ENCODE measurements at regions of chr9 and their contacts with region 1.

Region 1: DNA sequence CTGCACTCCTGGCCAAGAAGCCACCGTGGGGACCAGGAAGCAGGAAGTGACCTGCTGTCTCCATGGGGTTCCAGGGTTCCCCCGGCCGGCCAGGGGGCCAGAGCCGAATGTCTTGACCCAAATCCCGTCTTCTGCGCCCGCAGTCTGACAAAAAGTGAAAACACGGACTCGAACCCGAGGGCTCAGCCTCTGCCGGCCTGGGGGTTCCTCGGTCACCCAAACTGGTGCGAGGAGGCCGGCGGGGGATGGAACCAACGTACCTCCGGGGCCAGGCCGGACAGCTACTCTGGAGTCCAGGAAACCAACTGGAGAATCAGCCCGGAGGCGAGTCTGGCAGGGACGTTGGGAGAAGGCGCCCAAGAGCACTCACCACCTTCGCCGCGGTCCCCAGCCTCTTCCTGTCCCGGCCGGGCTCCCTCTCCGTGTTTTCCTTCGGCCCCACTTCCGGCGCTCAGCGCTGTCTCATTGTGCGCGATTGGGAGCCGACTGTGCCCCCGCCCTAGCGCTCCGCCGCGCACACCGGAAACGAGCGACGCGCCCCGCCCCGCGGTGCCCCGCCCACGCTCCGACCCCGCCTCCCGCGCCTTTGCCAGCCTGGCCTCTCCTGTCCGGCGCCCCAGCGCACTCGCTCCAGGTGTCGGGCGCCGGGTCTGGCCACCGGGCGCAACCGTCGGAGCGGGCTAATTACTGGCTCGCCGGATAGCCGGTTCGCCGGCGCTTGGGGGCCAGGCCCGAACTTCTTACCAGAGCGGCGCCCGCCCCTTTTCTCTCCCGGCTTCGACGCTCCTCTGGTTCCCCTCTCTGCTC is at the start of gene TUT7:
- DNase-seq: peak; percentile 90 to 99 (median 94)
- ATAC-seq: peak; percentile 98
- H3K4me3 ChIP-seq: peak within 1 kb of the TSS; percentile 95
- H3K4me3 Mint-ChIP-seq: peak within 1 kb of the TSS; percentile 80 to 97 (median 95)
- H3K27ac ChIP-seq: peak within 1 kb of the TSS; percentile 84
- H3K27ac Mint-ChIP-seq: peak within 1 kb of the TSS; percentile 85 to 97 (median 94)
- H3K4me1 ChIP-seq: peaks cover 7 to 14% of the 10 kb centered on the region in 2 donors
- H3K4me1 Mint-ChIP-seq: peaks cover 28 to 57% (median 50%) of the 10 kb centered on the region in 7 donors
- H3K27me3 ChIP-seq: no peaks in the 10 kb centered on the region
- H3K27me3 Mint-ChIP-seq: peaks cover 0 to 10% (median 0%) of the 10 kb centered on the region in 5 donors
- total RNA-seq, gene TUT7: 38.5 to 57.4 (median 49.0) TPM

Region 2: GRCh38 chr9:85741875-85742629 is 612.2 kb before region 1 on chr9 and contains the start of gene AGTPBP1:
- CTCF ChIA-PET with region 1: no interaction called
- POLR2A ChIA-PET with region 1: no interaction called
- intact Hi-C with region 1: loop called in 1 of 2 experiments (anchors 1 kb)
- DNase-seq: peak; percentile 95 to 99 (median 97)
- ATAC-seq: peak; percentile 93
- H3K4me3 ChIP-seq: peak within 1 kb of the TSS; percentile 88
- H3K4me3 Mint-ChIP-seq: peak within 1 kb of the TSS; percentile 90 to 99 (median 95)
- H3K27ac ChIP-seq: peak within 1 kb of the TSS; percentile 93
- H3K27ac Mint-ChIP-seq: peak within 1 kb of the TSS; percentile 91 to 99 (median 95)
- H3K4me1 ChIP-seq: peaks cover 0 to 14% of the 10 kb centered on the region in 2 donors
- H3K4me1 Mint-ChIP-seq: peaks cover 14 to 48% (median 33%) of the 10 kb centered on the region in 7 donors
- H3K27me3 ChIP-seq: no peaks in the 10 kb centered on the region
- H3K27me3 Mint-ChIP-seq: peaks cover 0 to 18% (median 0%) of the 10 kb centered on the region in 5 donors
- total RNA-seq, gene AGTPBP1: 31.9 to 85.7 (median 59.6) TPM

Region 3: GRCh38 chr9:86282077-86282978 is 71.9 kb before region 1 on chr9 and contains the start of gene ISCA1:
- CTCF ChIA-PET with region 1: no interaction called
- POLR2A ChIA-PET with region 1: interaction called, 6 read pairs
- intact Hi-C with region 1: loop called (anchors 1 kb)
- DNase-seq: peak; percentile 97 to 99 (median 97)
- ATAC-seq: peak; percentile 92
- H3K4me3 ChIP-seq: peak within 1 kb of the TSS; percentile 89
- H3K4me3 Mint-ChIP-seq: peak within 1 kb of the TSS; percentile 85 to 98 (median 94)
- H3K27ac ChIP-seq: peak within 1 kb of the TSS; percentile 99
- H3K27ac Mint-ChIP-seq: peak within 1 kb of the TSS; percentile 90 to 98 (median 96)
- H3K4me1 ChIP-seq: peaks cover 14 to 17% of the 10 kb centered on the region in 2 donors
- H3K4me1 Mint-ChIP-seq: peaks cover 30 to 53% (median 48%) of the 10 kb centered on the region in 7 donors
- H3K27me3 ChIP-seq: no peaks in the 10 kb centered on the region
- H3K27me3 Mint-ChIP-seq: no peaks in the 10 kb centered on the region
- total RNA-seq, gene ISCA1: 26.3 to 62.3 (median 38.4) TPM

Region 4: GRCh38 chr9:86337469-86338108 is 16.6 kb before region 1 on chr9:
- CTCF ChIA-PET with region 1: no interaction called
- POLR2A ChIA-PET with region 1: interaction called, 6 read pairs
- intact Hi-C with region 1: loop called (anchors 1 kb)
- DNase-seq: no peak
- ATAC-seq: peak; percentile 70
- H3K4me3 ChIP-seq: peak overlapping the region; percentile 46
- H3K4me3 Mint-ChIP-seq: peak overlapping the region in 9 of 10 donors; percentile 37 to 88 (median 85)
- H3K27ac ChIP-seq: no peak overlapping the region
- H3K27ac Mint-ChIP-seq: peak overlapping the region in 7 of 9 donors; percentile 31 to 81 (median 68)
- H3K4me1 ChIP-seq: peaks cover 0 to 16% of the 10 kb centered on the region in 2 donors
- H3K4me1 Mint-ChIP-seq: peaks cover 12 to 52% (median 25%) of the 10 kb centered on the region in 7 donors
- H3K27me3 ChIP-seq: no peaks in the 10 kb centered on the region
- H3K27me3 Mint-ChIP-seq: no peaks in the 10 kb centered on the region

Region 5: GRCh38 chr9:86948074-86948929 is 594.1 kb after region 1 on chr9:
- CTCF ChIA-PET with region 1: no interaction called
- POLR2A ChIA-PET with region 1: no interaction called
- intact Hi-C with region 1: loop called (anchors 1 kb)
- DNase-seq: peak; percentile 50 to 70 (median 66)
- ATAC-seq: peak; percentile 80
- H3K4me3 ChIP-seq: peak overlapping the region; percentile 47
- H3K4me3 Mint-ChIP-seq: peak overlapping the region; percentile 80 to 95 (median 90)
- H3K27ac ChIP-seq: no peak overlapping the region
- H3K27ac Mint-ChIP-seq: peak overlapping the region in 5 of 9 donors; percentile 13 to 75 (median 52)
- H3K4me1 ChIP-seq: peaks cover 5 to 13% of the 10 kb centered on the region in 2 donors
- H3K4me1 Mint-ChIP-seq: peaks cover 7 to 26% (median 15%) of the 10 kb centered on the region in 7 donors
- H3K27me3 ChIP-seq: peaks cover 6 to 16% of the 10 kb centered on the region in 2 donors
- H3K27me3 Mint-ChIP-seq: peaks cover 12 to 35% (median 19%) of the 10 kb centered on the region in 5 donors

Measured in naive thymus-derived CD4-positive, alpha-beta T cell (primary cell).